OCI-LY7 (cell line): ENCODE measurements at regions of chr9 and their contacts with region 1.

Region 1: DNA sequence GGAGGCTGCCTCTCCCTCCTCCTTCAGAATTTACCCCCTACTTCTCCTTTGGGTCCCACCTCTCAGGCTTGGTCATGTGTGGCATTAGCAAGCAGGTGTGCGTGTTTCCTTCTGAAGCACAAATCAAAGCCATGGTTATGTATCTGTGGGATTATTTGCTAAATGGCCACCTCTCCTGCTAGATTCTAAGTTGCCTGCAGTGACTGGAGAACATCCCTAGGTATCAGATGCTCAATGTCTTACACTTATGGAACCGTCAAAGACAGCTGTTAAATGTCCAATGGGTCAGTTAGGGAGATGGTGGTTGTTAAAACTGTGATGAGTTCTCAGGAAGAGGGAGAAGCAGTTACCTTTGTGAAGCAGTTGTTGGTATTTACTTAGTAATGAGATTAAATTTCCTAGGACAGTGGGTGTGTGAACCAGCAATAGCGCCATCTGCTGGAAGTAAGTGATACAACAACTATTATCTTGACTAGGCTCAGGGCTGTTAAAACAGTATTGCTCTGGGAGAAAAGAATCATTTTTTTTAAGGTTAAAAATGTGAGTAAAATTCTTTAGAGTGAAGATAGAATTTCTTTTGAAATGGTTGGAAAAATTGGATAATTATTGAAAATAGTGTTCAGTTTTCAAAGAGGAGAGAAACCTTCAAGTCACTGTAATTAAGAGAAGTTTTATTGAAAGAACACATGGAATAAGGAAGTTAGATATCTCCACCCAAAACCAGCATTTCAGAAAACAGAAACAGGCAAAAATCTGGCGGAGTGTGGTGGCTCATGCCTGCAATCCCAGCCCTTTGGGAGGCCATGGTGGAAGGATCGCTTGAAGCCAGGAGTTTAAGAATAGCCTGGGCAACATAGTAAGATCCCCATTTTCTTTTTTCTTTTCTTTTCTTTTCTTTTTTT is 71.3 kb downstream of the TMC1 start:
- DNase-seq: peak; percentile 52
- H3K4me3 ChIP-seq: no peak overlapping the region
- H3K27ac ChIP-seq: no peak overlapping the region
- H3K4me1 ChIP-seq: no peaks in the 10 kb centered on the region
- CTCF ChIP-seq: peak; percentile 96

Region 2: GRCh38 chr9:72038890-72039410 is 553.8 kb before region 1 on chr9:
- CTCF ChIA-PET with region 1: no interaction called
- POLR2A ChIA-PET with region 1: no interaction called
- intact Hi-C with region 1: loop called (anchors 2 kb)
- DNase-seq: peak; percentile 64
- H3K4me3 ChIP-seq: no peak overlapping the region
- H3K27ac ChIP-seq: no peak overlapping the region
- H3K4me1 ChIP-seq: no peaks in the 10 kb centered on the region
- CTCF ChIP-seq: peak; percentile 86

Region 3: DNA sequence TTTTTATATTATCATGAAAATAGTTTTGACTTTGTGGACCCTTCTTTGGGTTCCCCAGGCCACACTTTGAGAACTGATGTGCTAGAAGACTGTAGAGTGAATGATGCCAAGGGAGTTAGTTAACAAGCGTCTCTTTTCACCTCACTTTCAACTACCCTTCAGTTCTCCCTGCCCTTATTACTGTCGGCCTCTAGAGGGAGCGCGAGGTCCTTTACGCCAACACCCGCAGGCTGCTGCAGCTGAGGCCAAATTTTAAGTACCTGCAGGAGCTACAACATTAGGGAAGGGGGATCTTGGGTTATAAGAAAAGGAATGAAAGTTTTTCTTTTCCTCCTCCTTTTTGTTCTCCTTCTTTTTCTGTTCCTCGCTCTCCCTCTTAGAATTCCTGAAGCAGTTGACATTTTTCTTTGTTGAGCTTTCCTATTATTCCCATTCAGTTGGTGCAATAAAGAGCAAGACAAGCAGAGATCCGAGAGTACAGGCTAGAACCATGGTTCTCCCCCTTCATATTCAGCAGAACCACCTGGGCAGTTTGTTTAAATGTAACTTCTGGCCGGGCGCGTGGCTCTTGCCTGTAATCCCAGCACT is 311.7 kb before region 1 on chr9:
- CTCF ChIA-PET with region 1: interaction called, 3 read pairs
- POLR2A ChIA-PET with region 1: no interaction called
- intact Hi-C with region 1: loop called (anchors 1 kb)
- DNase-seq: peak; percentile 59
- H3K4me3 ChIP-seq: no peak overlapping the region
- H3K27ac ChIP-seq: no peak overlapping the region
- H3K4me1 ChIP-seq: no peaks in the 10 kb centered on the region
- CTCF ChIP-seq: peak; percentile 94

Region 4: GRCh38 chr9:72557549-72557948 is 35.2 kb before region 1 on chr9:
- CTCF ChIA-PET with region 1: no interaction called
- POLR2A ChIA-PET with region 1: no interaction called
- intact Hi-C with region 1: no loop called
- DNase-seq: no peak
- H3K4me3 ChIP-seq: no peak overlapping the region
- H3K27ac ChIP-seq: no peak overlapping the region
- H3K4me1 ChIP-seq: no peaks in the 10 kb centered on the region
- CTCF ChIP-seq: no peak

Region 5: DNA sequence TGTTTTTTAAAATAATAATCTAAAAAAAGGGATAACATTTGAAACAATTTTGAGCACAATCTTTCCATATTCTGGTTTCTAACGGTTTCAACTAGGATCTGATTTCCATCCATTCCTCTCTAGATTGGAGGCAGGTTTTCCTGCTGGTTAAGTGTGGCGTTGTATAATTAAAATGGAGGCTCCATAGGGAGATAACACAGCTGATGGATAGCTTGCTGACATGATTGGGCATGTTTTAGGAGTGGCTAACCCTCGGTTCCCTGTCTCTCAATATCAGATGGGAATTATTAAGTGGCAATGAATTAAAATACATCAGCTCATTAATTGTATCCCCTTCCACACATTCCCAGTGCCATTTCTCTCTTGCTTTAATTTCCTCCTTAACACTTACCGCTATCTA is 151.1 kb after region 1 on chr9:
- CTCF ChIA-PET with region 1: no interaction called
- POLR2A ChIA-PET with region 1: no interaction called
- intact Hi-C with region 1: no loop called
- DNase-seq: no peak
- H3K4me3 ChIP-seq: no peak overlapping the region
- H3K27ac ChIP-seq: no peak overlapping the region
- H3K4me1 ChIP-seq: no peaks in the 10 kb centered on the region
- CTCF ChIP-seq: no peak